ENCODE measurements at regions of chr2 and their contacts with region 1.

Region 1: GRCh38 chr2:17851731-17852585 is 26.5 kb upstream of the KCNS3 start:
- DNase-seq: peak; percentile 20 to 91 (median 66)

Region 2: GRCh38 chr2:18149645-18150246 is 297.8 kb after region 1 on chr2:
- intact Hi-C with region 1: loop called (anchors 2 kb)
- DNase-seq: no peak

Region 3: DNA sequence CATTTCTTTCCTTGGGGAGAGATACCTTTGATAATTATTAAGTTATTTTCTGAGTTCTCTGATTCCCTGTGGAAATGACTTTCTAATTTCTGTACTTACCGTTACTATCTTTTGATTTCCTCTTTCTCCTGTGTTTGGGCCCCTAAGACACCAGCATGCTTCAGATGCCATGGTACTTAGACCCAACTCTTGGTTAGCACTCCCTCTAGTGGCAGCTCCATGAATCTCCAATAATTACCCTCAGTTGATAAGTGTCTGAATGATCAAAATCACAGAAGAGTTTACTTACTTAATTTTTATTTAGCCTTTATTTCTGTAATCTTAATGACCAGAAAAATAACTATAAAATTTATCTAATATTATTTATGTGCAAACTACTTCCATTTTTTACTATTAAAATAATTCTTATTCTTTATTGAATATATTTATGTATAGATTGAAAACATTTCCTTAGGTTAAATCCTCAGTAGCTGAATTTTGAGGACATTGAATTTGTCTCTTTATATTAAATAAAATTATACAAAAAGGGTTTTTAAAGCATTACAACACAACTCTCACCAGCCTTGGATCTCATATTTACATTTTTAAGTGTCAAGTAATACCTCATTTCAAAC is 326.9 kb after region 1 on chr2:
- intact Hi-C with region 1: loop called (anchors 5 kb)
- DNase-seq: peak in 3 of 10 donors; percentile 10 to 32 (median 26)

Region 4: DNA sequence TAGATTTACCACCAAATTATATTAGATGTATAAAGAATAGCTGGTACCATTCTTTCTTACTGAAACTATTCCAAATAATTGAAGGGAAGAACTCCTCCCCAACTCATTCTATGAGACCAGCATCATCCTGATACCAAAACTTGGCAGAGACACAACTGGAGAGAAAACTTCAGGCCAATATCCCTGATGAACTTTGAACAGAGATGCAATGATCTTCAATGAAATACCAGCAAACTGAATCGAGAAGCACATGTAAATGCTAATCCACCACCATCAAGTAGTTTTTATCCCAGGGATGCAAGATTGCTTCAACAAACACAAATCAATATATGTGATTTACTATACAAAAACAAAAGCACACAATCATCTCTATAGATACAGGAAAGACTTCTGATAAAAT is 378.7 kb after region 1 on chr2:
- intact Hi-C with region 1: no loop called
- DNase-seq: no peak

Region 5: DNA sequence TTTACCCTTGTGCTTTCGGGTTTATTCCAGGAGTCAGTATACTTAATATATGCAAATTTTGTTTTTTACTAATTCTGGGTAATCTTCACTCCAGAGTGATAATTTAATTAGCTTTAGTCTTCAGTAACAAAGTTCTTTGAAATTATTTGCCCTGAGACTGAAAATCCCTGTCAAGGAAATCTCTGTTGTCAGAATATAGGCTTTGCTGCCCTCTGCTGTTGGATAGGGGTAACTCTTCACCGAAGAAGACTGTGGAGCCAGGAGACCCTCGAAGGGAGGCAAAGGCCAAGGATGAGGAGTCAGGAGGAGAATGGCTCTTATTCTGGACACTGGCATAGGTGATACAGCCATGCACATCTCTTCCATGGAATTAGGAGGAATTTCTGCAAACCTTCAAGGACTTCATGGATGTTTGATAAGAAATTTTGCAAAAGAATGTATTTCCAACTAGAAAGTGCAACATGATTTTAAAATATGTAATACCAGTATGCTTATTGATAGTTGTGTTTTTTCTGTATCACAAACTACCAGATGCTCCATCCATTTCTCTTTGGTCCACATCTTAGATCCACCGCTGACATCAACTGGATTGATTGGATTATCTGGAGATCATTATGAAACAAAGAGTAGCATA is 526.2 kb after region 1 on chr2:
- intact Hi-C with region 1: loop called (anchors 1 kb)
- DNase-seq: peak in 5 of 10 donors; percentile 7 to 37 (median 21)

Measured in posterior cingulate gyrus (tissue), 11 donors.